ENCODE measurements at regions of chr1 and their contacts with region 1.

Region 1: DNA sequence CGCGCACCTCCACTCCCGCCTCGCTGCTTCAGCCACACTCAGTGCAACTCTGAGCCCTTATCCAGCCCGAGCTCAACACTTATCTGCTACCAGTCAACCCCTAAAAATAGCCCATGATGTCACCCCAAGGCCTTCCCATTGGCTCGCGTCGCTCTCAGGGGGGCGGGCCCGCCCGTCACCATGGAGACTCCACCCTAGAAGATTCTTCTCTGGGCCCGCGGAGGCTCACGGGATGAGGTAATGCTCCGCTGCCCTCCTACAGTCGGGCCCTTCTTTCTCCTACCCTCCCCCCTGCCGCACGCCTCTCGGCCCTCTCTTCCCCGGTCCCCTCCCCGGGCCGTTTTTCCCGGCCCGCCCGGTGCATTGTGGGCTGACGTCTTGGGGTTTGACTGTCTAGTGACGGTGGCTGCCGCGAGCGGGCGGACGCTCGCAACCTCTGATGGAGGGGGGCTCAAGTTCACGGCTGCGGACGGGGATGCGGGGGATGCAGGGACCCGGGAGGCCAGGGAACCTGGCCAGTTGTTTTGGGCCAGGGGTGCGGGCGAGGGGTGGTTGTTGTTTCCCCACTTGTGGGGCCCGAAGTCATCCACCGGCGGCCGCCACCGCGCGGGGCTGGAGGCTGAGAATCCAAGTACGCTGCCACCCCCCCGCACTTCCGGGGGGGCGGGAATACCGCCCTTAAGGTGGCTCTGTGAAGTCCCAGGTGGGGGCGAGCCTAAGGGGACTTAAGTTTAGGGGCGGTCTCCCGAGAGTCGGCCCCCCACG is at the start of gene JUN:
- DNase-seq: peak; percentile 98
- ATAC-seq: peak; percentile 86
- H3K4me3 ChIP-seq: peak within 1 kb of the TSS; percentile 82 to 90 (median 87)
- H3K27ac ChIP-seq: peak within 1 kb of the TSS; percentile 86
- H3K4me1 ChIP-seq: peaks cover 36% of the 10 kb centered on the region
- H3K27me3 ChIP-seq: no peaks in the 10 kb centered on the region; a peak in 1 of 5 replicates
- CTCF ChIP-seq: 0 out of 2 replicates have a peak, but pooled peaks have one; percentile 19
- EP300 ChIP-seq: peak; percentile 47 to 89; a peak in 3 of 4 replicates
- POLR2A ChIP-seq: peak; percentile 99 to 100
- RAD21 ChIP-seq: no peak
- total RNA-seq, gene JUN: 13.3 and 22.3 TPM in 2 replicates

Region 2: GRCh38 chr1:58768971-58769808 is 15.0 kb before region 1 on chr1:
- CTCF ChIA-PET with region 1: interaction called, 3 read pairs
- POLR2A ChIA-PET with region 1: interaction called, 15 read pairs
- in situ Hi-C with region 1: no loop called
- intact Hi-C with region 1: no loop called
- DNase-seq: peak; percentile 56
- ATAC-seq: peak; percentile 79
- H3K4me3 ChIP-seq: no peak overlapping the region
- H3K27ac ChIP-seq: no peak overlapping the region
- H3K4me1 ChIP-seq: peaks cover 41% of the 10 kb centered on the region
- H3K27me3 ChIP-seq: no peaks in the 10 kb centered on the region
- CTCF ChIP-seq: peak; percentile 79
- EP300 ChIP-seq: no peak
- POLR2A ChIP-seq: no peak
- RAD21 ChIP-seq: peak; percentile 75

Region 3: DNA sequence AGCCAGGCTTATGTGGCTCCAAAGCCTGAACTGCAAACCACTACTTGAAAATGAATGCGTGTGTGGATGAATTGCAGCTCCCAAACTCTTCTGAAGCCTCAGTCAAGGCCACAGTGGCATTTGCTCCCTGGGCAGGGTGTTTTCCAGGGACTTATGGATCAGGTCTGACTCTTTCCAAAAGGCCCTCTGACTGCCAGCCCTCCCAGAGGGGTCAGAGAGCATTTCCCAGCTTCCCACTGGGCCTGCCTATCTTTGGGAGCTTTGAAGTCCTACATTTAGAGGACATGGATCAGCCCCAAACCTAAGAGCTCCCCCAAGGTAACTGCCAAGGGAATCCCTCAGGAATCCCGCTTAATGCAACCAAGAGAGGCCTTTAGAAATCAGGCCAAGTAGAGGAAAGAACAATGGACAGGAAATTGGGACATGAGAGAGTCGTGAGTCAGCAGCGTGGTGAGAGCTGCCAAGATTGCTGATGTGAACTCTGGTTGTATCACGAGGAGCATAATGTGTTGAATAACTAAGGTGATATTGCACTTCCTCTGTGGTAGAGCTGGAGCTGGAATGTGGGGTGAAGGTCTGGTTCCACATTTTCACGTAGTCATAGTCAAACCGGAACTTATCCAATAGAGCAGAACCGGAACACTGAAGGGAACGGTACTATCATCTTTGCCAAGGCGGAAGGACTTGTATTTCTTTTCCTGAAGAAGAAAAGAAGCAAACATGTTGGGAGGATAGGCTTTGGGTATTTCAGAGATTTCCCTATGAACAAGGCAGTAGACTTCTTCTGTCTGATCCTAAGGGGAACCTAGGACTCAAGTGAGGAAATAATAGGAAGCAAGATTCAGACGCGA is 99.1 kb after region 1 on chr1:
- CTCF ChIA-PET with region 1: no interaction called
- POLR2A ChIA-PET with region 1: interaction called, 31 read pairs
- in situ Hi-C with region 1: loop called (anchors 5 kb)
- intact Hi-C with region 1: loop called (anchors 2 kb)
- DNase-seq: peak; percentile 93
- ATAC-seq: peak; percentile 50
- H3K4me3 ChIP-seq: 0 out of 6 replicates have a peak overlapping the region, but pooled peaks of 1 of the 3 experiments have one; percentile 18
- H3K27ac ChIP-seq: peak overlapping the region; percentile 77
- H3K4me1 ChIP-seq: peaks cover 76% of the 10 kb centered on the region
- H3K27me3 ChIP-seq: no peaks in the 10 kb centered on the region
- CTCF ChIP-seq: no peak
- EP300 ChIP-seq: peak in 1 of 2 experiments; percentile 78; a peak in 2 of 4 replicates
- POLR2A ChIP-seq: peak in 1 of 2 experiments; percentile 51; a peak in 2 of 4 replicates
- RAD21 ChIP-seq: peak; percentile 31; the same call in 1 of the 2 replicates

Region 4: DNA sequence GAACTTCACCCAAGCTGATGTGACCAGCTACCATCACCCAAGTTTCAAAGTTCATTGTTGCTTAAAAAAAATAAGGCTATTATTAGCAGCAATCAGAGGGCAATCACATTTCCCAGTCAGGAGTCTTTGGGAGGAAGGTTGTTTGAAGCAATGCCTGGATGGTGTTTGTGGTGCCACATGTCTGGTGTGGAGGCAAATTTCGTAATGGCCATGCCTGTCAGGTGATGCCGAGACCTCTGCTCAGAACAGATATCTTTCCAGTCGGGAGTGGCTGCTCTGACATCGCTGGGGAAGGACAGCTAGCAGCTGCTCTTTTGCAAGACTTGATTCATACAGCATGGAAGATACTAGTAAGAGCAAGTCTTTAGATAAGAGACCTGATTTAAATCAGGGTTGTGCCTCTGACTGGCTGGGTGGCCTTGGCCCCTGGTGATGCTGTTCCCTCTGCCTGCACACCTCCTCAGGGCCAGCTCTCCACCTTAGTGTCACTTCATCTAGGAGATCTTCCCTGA is 187.5 kb after region 1 on chr1:
- CTCF ChIA-PET with region 1: no interaction called
- POLR2A ChIA-PET with region 1: no interaction called
- in situ Hi-C with region 1: no loop called
- intact Hi-C with region 1: no loop called
- DNase-seq: peak; percentile 66
- ATAC-seq: peak; percentile 75
- H3K4me3 ChIP-seq: no peak overlapping the region
- H3K27ac ChIP-seq: no peak overlapping the region
- H3K4me1 ChIP-seq: peaks cover 38% of the 10 kb centered on the region
- H3K27me3 ChIP-seq: no peaks in the 10 kb centered on the region; a peak in 1 of 5 replicates
- CTCF ChIP-seq: no peak
- EP300 ChIP-seq: no peak
- POLR2A ChIP-seq: no peak
- RAD21 ChIP-seq: no peak

Region 5: GRCh38 chr1:59057211-59057694 is 273.1 kb after region 1 on chr1:
- CTCF ChIA-PET with region 1: no interaction called
- POLR2A ChIA-PET with region 1: interaction called, 4 read pairs
- in situ Hi-C with region 1: loop called (anchors 10 kb)
- intact Hi-C with region 1: loop called (anchors 1 kb)
- DNase-seq: peak; percentile 64
- ATAC-seq: peak; percentile 88
- H3K4me3 ChIP-seq: no peak overlapping the region
- H3K27ac ChIP-seq: no peak overlapping the region
- H3K4me1 ChIP-seq: peaks cover 33% of the 10 kb centered on the region
- H3K27me3 ChIP-seq: peaks cover 5 to 36% of the 10 kb centered on the region in 2 experiments
- CTCF ChIP-seq: no peak
- EP300 ChIP-seq: peak in 1 of 2 experiments; percentile 52; a peak in 2 of 4 replicates
- POLR2A ChIP-seq: no peak
- RAD21 ChIP-seq: no peak

Region 6: GRCh38 chr1:59116920-59117542 is 332.9 kb after region 1 on chr1:
- CTCF ChIA-PET with region 1: no interaction called
- POLR2A ChIA-PET with region 1: no interaction called
- in situ Hi-C with region 1: no loop called
- intact Hi-C with region 1: no loop called
- DNase-seq: no peak
- ATAC-seq: no peak
- H3K4me3 ChIP-seq: no peak overlapping the region
- H3K27ac ChIP-seq: no peak overlapping the region
- H3K4me1 ChIP-seq: no peaks in the 10 kb centered on the region
- H3K27me3 ChIP-seq: peaks cover 0 to 4% of the 10 kb centered on the region in 2 experiments; a peak in 2 of 5 replicates
- CTCF ChIP-seq: no peak
- EP300 ChIP-seq: no peak
- POLR2A ChIP-seq: no peak
- RAD21 ChIP-seq: no peak

Region 7: GRCh38 chr1:59296358-59297256 is 512.4 kb after region 1 on chr1 and contains the start of gene FGGY:
- CTCF ChIA-PET with region 1: no interaction called
- POLR2A ChIA-PET with region 1: interaction called, 14 read pairs
- in situ Hi-C with region 1: loop called (anchors 10 kb)
- intact Hi-C with region 1: loop called (anchors 1 kb)
- DNase-seq: peak; percentile 96
- ATAC-seq: peak; percentile 95
- H3K4me3 ChIP-seq: peak within 1 kb of the TSS; percentile 59 to 85 (median 82)
- H3K27ac ChIP-seq: peak within 1 kb of the TSS; percentile 93
- H3K4me1 ChIP-seq: peaks cover 53% of the 10 kb centered on the region
- H3K27me3 ChIP-seq: no peaks in the 10 kb centered on the region; a peak in 1 of 5 replicates
- CTCF ChIP-seq: peak; percentile 25
- EP300 ChIP-seq: no peak
- POLR2A ChIP-seq: peak; percentile 77 to 84
- RAD21 ChIP-seq: no peak; the same call in none of the 2 replicates
- total RNA-seq, gene FGGY: 15.7 and 20.0 TPM in 2 replicates

Measured in HepG2 (cell line).